SK-N-SH (cell line): ENCODE measurements at regions of chr12 and their contacts with region 1.

Region 1: DNA sequence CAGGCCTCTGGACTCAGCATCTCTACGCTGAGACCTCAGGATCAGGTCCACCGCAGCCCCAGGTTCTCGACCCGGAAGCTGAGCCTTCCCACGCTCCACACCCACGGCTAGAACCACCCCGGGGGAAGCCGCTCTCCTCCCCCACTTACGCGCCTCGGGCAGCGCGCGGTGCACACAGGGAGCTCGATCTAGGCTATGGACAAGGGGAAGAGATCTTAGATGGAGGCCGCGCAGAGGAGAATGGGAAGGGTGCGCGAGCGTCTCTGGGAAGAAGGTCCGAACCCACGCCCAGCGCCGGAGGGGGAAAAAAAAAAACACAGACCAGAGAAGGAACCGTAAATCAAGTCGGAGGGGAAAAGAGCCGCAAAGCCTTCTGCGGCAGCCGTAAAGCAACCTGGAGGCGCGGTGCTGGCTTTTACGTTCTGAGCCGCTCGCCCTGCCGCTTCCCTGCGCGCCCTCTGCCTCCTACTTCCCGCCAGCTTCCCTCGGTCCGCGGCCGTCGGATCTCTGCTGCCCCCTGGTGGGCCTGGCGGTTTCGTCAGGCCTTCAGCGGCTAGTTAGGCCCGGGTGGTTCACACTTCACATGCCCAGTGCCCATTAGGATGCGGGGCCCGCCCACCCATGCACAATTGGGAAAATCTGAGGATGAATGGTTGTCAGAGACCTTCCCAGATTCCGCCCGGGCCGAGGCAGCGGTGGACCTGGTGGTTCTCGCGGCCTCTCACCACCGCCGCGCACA is at the start of gene RAD52:
- DNase-seq: peak; percentile 91
- H3K4me3 ChIP-seq: peak within 1 kb of the TSS; percentile 69 to 94
- H3K27ac ChIP-seq: peak within 1 kb of the TSS; percentile 95
- H3K4me1 ChIP-seq: peaks cover 2 to 6% of the 10 kb centered on the region in 2 experiments; a peak in 3 of 4 replicates
- H3K27me3 ChIP-seq: no peaks in the 10 kb centered on the region
- CTCF ChIP-seq: peak; percentile 91
- EP300 ChIP-seq: peak; percentile 18 to 69; a peak in 1 of 4 replicates
- RAD21 ChIP-seq: peak; percentile 79
- polyA plus RNA-seq, gene RAD52: 11.2 and 12.1 TPM in 2 replicates

Region 2: GRCh38 chr12:818733-819132 is 130.9 kb before region 1 on chr12:
- CTCF ChIA-PET with region 1: interaction called, 45 read pairs
- POLR2A ChIA-PET with region 1: no interaction called
- DNase-seq: no peak
- H3K4me3 ChIP-seq: no peak overlapping the region
- H3K27ac ChIP-seq: no peak overlapping the region
- H3K4me1 ChIP-seq: no peaks in the 10 kb centered on the region
- H3K27me3 ChIP-seq: no peaks in the 10 kb centered on the region
- CTCF ChIP-seq: peak; percentile 16; the same call in 1 of the 2 replicates
- EP300 ChIP-seq: no peak
- RAD21 ChIP-seq: no peak

Region 3: GRCh38 chr12:1063852-1064251 is 114.2 kb after region 1 on chr12:
- CTCF ChIA-PET with region 1: no interaction called
- POLR2A ChIA-PET with region 1: no interaction called
- DNase-seq: no peak
- H3K4me3 ChIP-seq: no peak overlapping the region
- H3K27ac ChIP-seq: no peak overlapping the region
- H3K4me1 ChIP-seq: no peaks in the 10 kb centered on the region
- H3K27me3 ChIP-seq: no peaks in the 10 kb centered on the region
- CTCF ChIP-seq: no peak
- EP300 ChIP-seq: no peak
- RAD21 ChIP-seq: no peak